Right ventricle myocardium superior (tissue), 1 donor: ENCODE measurements at regions of chr17 and their contacts with region 1.

Region 1: DNA sequence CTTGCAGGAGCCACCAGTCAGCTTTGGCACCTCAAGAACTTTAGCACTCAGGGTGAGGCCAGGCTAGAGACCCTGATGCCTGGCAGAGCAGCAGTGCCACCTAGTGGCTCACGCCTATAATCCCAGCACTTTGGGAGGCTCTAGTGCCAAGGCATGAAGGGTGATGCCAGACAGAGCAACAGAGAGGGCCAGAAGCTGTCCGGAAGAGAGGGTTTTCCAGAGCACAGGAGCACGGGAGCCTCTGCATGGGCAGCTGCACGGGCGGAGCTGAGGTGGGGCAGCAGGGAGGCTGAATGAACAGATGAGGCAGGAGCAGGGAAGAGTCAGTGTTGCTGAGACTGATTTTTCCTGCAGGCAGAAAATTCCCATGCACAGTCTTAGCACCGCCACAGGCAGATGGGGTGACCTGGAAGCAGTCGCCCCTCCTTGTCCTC is 38.9 kb downstream of the MYH3 start:
- DNase-seq: peak; percentile 62
- ATAC-seq: peak; percentile 92

Region 2: DNA sequence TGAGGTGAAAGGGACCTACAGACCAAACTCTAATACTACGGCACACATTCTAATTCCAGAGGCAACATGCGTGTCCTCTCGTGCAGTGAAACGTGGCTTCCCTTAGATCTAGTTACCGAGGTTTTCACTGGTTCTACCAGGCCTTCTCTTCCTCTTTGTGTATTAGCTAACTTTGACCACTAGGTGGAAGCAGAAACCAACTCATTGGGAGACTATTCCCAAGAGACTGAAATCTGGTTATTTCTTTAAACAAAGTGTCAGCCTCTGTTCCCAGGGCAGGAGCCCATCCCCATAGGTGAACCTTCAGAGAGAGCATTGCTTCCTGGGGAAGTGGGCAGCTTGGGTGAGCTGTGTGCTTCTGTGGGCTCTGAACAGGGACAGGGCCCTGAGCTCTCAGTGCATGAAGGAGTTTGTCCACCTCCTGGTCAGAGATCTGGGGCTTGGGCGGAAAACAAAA is 693.5 kb before region 1 on chr17:
- intact Hi-C with region 1: loop called (anchors 5 kb)
- DNase-seq: peak; percentile 36
- ATAC-seq: peak; percentile 71

Region 3: GRCh38 chr17:10295728-10296343 is 322.4 kb before region 1 on chr17:
- intact Hi-C with region 1: loop called (anchors 10 kb)
- DNase-seq: peak; percentile 53
- ATAC-seq: peak; percentile 73

Region 4: DNA sequence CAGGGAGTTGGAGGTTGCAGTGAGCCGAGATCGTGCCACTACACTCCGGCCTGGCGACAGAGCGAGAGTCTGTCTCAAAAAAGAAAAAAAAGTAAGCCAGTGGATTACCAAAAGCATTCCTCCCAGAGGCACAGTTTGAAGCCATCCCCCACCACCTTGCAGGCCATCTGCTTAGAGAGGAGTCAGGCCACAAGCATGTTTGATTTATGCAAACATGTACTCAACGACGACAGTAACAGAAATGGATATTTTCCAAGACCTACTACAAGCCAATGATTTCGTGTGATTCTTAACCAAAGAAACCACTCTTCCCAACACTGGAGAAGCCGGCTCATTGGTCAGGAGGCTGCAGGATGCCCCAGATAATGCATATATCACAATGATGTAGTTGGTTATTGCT is 280.2 kb before region 1 on chr17:
- intact Hi-C with region 1: loop called (anchors 10 kb)
- DNase-seq: no peak
- ATAC-seq: no peak